ENCODE measurements at regions of chr7 and their contacts with region 1.

Region 1: DNA sequence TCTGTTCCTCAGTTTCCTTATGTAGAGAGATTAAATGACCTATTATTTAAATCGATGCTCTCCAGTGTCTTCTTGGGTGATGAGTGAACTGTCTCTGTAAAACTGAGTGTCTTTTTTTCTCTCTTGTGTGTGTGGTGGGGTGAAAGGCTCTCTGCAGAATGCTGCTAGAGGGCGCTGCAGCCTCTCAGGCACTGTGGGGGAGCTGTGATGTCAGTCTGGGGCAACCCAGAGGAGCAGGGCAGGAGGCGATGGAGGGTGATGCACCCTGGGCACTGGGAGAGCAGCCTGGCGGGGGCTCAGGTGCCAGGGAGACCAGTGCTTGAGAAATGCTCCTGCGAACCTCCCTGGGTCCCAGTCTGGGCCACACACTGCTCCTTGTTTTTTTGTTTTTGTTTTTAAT is 110.1 kb upstream of the POM121L12 start:
- H3K4me3 Mint-ChIP-seq: no peak overlapping the region
- H3K27ac Mint-ChIP-seq: no peak overlapping the region
- H3K4me1 Mint-ChIP-seq: no peaks in the 10 kb centered on the region
- H3K27me3 Mint-ChIP-seq: no peaks in the 10 kb centered on the region

Region 2: DNA sequence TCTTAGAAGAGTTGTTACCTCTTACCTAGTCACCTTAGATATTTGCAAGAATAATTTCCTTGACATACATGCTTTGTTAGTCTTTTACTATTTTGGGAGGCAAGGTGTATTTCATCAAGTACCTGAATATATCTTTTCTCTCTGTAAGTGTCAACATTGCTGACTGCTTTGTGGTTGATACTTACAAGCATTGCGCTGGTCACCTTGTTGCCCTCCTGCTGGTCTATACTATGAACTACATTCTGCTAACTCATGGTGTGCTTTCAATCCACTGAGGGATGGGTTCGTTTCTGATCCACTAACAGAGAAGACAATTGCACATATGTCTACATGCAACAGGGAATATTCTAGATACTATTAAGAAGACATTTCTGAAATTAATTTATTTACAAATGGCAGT is 771.0 kb before region 1 on chr7:
- intact Hi-C with region 1: no loop called
- H3K4me3 Mint-ChIP-seq: no peak overlapping the region
- H3K27ac Mint-ChIP-seq: no peak overlapping the region
- H3K4me1 Mint-ChIP-seq: no peaks in the 10 kb centered on the region
- H3K27me3 Mint-ChIP-seq: no peaks in the 10 kb centered on the region

Region 3: GRCh38 chr7:52635021-52635420 is 290.3 kb before region 1 on chr7:
- intact Hi-C with region 1: no loop called
- H3K4me3 Mint-ChIP-seq: no peak overlapping the region
- H3K27ac Mint-ChIP-seq: no peak overlapping the region
- H3K4me1 Mint-ChIP-seq: no peaks in the 10 kb centered on the region
- H3K27me3 Mint-ChIP-seq: no peaks in the 10 kb centered on the region

Region 4: DNA sequence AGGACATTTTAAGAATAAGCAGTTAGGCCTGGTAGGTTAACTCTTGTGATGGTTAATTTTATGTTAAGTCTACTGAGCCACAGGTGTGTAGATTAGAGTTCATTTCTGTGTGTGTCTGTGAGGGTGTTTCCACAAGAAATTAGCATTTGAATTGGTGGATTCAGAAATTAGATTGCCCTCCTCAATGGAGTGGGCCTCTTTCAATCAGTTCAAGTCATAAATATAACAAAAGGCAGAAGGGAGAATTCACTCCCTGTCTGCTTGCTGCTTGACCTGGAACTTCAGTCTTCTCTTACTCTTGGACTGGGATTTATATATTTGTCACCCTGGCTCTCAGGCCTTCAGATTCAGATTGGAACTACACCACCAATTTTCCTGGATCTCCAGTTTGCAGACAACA is 54.8 kb after region 1 on chr7:
- intact Hi-C with region 1: loop called (anchors 10 kb)
- H3K4me3 Mint-ChIP-seq: no peak overlapping the region
- H3K27ac Mint-ChIP-seq: no peak overlapping the region
- H3K4me1 Mint-ChIP-seq: no peaks in the 10 kb centered on the region
- H3K27me3 Mint-ChIP-seq: no peaks in the 10 kb centered on the region